ENCODE measurements at regions of chr2 and their contacts with region 1.

Region 1: GRCh38 chr2:55779459-55780421 is 86.1 kb upstream of the PNPT1 start:
- DNase-seq: no peak
- H3K4me3 ChIP-seq: no peak overlapping the region
- H3K27ac ChIP-seq: no peak overlapping the region
- H3K4me1 ChIP-seq: no peaks in the 10 kb centered on the region
- H3K27me3 ChIP-seq: peaks cover 20% of the 10 kb centered on the region
- CTCF ChIP-seq: no peak

Region 2: DNA sequence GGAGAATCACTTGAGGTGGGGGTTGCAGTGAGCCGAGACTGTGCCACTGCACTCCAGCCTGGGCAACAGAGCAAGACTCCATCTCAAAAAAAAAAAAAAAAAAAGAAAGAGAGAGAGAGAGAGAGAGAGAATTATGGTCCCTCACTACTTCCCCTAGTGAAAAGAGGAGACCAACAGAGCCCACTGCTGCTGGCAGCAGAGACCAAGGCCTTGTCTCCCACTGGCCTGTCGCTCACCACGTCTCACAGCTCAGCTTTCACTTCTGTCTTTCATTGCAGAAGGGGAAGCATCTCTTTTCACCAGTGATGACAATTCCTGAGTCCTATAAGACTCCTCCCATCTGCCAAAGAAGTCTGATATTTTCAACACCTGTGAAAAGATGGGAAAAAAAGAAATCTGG is 628.9 kb before region 1 on chr2:
- CTCF ChIA-PET with region 1: no interaction called
- POLR2A ChIA-PET with region 1: no interaction called
- intact Hi-C with region 1: no loop called
- DNase-seq: no peak
- H3K4me3 ChIP-seq: no peak overlapping the region
- H3K27ac ChIP-seq: no peak overlapping the region
- H3K4me1 ChIP-seq: peaks cover 1% of the 10 kb centered on the region
- H3K27me3 ChIP-seq: no peaks in the 10 kb centered on the region
- CTCF ChIP-seq: no peak

Region 3: DNA sequence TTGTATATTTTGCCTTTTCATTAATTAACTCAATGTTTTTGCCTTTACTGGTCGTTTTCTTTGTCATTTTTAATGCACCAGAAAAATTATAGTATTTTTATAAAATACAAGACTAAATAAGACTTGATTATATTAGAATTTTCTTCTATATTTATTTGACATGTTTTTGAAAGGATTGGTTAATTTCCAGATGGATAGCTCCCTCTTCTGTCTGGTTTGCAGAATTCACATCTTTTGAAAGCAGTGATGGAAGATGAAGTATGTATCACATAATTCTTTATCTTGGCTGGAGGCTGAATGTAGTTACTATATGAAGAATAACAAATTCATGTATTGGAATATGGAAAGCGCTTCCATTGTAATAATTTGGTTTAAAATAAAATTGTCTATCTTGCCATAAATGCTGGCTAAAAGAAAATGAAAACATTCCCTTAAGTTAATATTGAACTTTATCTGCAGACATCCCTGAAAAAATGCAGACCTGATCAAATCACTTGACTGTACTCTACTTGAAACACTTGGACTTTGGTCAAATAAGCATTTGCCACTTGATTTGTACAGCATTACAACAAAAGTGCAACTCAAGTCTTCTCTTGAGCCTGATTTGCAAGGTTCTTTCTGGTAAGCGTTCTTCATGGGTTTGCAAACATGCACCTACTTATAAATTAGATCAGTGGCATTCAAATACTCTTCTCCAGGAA is 230.2 kb after region 1 on chr2:
- CTCF ChIA-PET with region 1: no interaction called
- POLR2A ChIA-PET with region 1: no interaction called
- intact Hi-C with region 1: loop called (anchors 5 kb)
- DNase-seq: peak; percentile 51
- H3K4me3 ChIP-seq: no peak overlapping the region
- H3K27ac ChIP-seq: no peak overlapping the region
- H3K4me1 ChIP-seq: peaks cover 5% of the 10 kb centered on the region
- H3K27me3 ChIP-seq: peaks cover 14% of the 10 kb centered on the region
- CTCF ChIP-seq: peak; percentile 71

Measured in A673 (cell line).